ENCODE measurements at regions of chr11 and their contacts with region 1.

Region 1: DNA sequence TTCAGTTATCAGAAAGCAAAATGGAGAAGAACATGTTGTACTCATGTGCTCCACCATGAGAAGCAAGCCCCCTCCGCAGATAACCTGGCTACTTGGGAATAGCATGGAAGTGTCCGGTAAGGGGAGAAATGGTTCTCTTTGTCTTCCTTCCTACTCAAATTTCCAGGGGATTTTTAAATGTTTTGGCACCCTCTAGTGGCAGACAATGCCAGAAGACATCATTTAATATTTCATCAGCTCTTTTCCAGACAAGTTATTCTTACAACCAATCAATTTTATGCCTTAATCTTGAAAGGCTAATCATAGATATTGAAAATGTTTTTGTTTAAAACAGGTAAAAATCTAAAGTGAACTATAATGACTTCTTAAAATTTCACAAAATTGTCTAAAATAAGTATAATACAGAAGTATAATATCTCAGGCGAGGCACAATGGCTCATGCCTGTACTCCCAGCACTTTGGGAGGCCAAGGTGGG is 15.7 kb downstream of the CRTAM start:
- DNase-seq: peak; percentile 85
- H3K4me3 Mint-ChIP-seq: no peak overlapping the region
- H3K27ac Mint-ChIP-seq: no peak overlapping the region
- H3K4me1 Mint-ChIP-seq: peaks cover 41% of the 10 kb centered on the region
- H3K27me3 Mint-ChIP-seq: peaks cover 17% of the 10 kb centered on the region

Region 2: DNA sequence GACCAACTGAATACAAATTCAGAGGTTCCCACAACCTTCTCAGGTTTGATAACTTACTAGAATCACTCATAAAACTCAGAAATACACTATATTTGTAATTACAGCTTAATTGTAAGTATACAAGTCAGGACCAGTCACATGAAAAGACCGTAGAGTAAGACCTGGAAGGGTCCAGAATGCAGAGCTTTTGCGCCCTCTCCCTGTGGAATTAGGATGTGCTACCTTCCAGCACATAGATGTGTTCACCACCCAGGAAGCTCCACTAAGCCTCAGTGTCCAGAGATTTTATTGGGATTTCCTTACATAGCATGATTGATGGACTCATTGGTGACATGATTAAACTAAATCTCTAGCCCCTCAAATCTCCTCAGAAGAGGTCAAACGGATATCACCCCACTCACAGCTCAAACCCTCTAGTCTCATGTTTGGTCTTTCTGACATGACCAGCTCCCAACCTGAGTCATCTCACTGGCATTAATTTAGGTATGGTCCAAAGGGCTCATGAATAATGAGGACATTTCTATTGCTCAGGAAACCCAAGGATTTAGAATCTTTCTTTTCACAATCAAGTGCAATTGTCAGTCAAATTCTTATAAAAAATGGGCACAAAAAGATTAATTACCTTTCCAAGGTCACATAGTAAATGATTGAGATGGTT is 275.7 kb before region 1 on chr11:
- intact Hi-C with region 1: loop called (anchors 1 kb)
- DNase-seq: no peak
- H3K4me3 Mint-ChIP-seq: no peak overlapping the region
- H3K27ac Mint-ChIP-seq: no peak overlapping the region
- H3K4me1 Mint-ChIP-seq: peaks cover 7% of the 10 kb centered on the region
- H3K27me3 Mint-ChIP-seq: no peaks in the 10 kb centered on the region

Region 3: GRCh38 chr11:122655527-122656072 is 198.4 kb before region 1 on chr11 and contains the start of gene UBASH3B:
- intact Hi-C with region 1: loop called (anchors 10 kb)
- DNase-seq: peak; percentile 89
- H3K4me3 Mint-ChIP-seq: peak within 1 kb of the TSS; percentile 97
- H3K27ac Mint-ChIP-seq: peak within 1 kb of the TSS; percentile 86
- H3K4me1 Mint-ChIP-seq: peaks cover 17% of the 10 kb centered on the region
- H3K27me3 Mint-ChIP-seq: peaks cover 50% of the 10 kb centered on the region
- total RNA-seq, gene UBASH3B: 10.9 and 14.8 TPM in 2 replicates

Region 4: DNA sequence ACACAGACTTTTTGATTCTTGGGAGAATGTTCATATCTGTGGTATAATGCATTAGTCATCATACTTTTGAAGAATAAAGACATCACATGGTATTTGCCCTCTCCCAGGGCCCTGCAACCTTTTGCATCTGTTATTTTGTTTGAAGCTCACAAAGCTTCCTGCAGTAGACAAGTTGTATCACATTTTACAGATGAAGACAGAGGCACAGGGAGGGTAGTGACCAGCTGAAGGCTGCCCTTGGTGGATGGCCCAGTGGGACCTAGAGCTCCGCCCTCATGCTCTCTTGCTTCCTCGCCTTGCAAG is 132.1 kb before region 1 on chr11:
- intact Hi-C with region 1: loop called (anchors 1 kb)
- DNase-seq: peak; percentile 61
- H3K4me3 Mint-ChIP-seq: no peak overlapping the region
- H3K27ac Mint-ChIP-seq: peak overlapping the region; percentile 45
- H3K4me1 Mint-ChIP-seq: peaks cover 51% of the 10 kb centered on the region
- H3K27me3 Mint-ChIP-seq: peaks cover 14% of the 10 kb centered on the region

Region 5: GRCh38 chr11:122769126-122769780 is 84.8 kb before region 1 on chr11:
- intact Hi-C with region 1: no loop called
- DNase-seq: no peak
- H3K4me3 Mint-ChIP-seq: no peak overlapping the region
- H3K27ac Mint-ChIP-seq: no peak overlapping the region
- H3K4me1 Mint-ChIP-seq: no peaks in the 10 kb centered on the region
- H3K27me3 Mint-ChIP-seq: peaks cover 11% of the 10 kb centered on the region

Region 6: GRCh38 chr11:122781378-122782195 is 72.4 kb before region 1 on chr11:
- intact Hi-C with region 1: loop called (anchors 1 kb)
- DNase-seq: peak; percentile 91
- H3K4me3 Mint-ChIP-seq: no peak overlapping the region
- H3K27ac Mint-ChIP-seq: no peak overlapping the region
- H3K4me1 Mint-ChIP-seq: peaks cover 16% of the 10 kb centered on the region
- H3K27me3 Mint-ChIP-seq: no peaks in the 10 kb centered on the region

Region 7: DNA sequence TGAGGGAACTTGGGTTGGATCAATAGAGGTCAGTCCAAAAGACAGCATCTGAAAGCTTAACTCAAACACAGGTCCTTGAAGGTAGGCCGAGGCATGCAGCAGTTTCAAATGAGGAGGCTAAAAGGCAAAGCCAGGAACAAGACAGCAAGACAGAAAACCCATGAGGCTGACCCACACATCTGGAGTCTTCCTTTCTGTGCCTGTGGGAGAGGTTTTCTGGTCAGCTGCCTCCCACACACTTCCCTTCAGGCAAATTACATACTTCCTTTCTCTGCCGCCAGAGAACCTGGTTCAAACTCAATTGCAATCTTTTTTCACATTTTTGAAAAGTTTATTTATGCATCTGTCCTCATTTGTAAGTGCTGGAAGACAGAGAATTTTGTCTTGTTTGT is 45.5 kb before region 1 on chr11:
- intact Hi-C with region 1: loop called (anchors 1 kb)
- DNase-seq: peak; percentile 61
- H3K4me3 Mint-ChIP-seq: peak overlapping the region; percentile 16
- H3K27ac Mint-ChIP-seq: peak overlapping the region; percentile 25
- H3K4me1 Mint-ChIP-seq: peaks cover 21% of the 10 kb centered on the region
- H3K27me3 Mint-ChIP-seq: peaks cover 4% of the 10 kb centered on the region

Region 8: GRCh38 chr11:122882857-122883645 is 29.0 kb after region 1 on chr11:
- intact Hi-C with region 1: loop called (anchors 2 kb)
- DNase-seq: peak; percentile 86
- H3K4me3 Mint-ChIP-seq: peak overlapping the region; percentile 85
- H3K27ac Mint-ChIP-seq: peak overlapping the region; percentile 75
- H3K4me1 Mint-ChIP-seq: peaks cover 19% of the 10 kb centered on the region
- H3K27me3 Mint-ChIP-seq: peaks cover 15% of the 10 kb centered on the region

Region 9: GRCh38 chr11:123729602-123730001 is 875.6 kb after region 1 on chr11:
- intact Hi-C with region 1: no loop called
- DNase-seq: no peak
- H3K4me3 Mint-ChIP-seq: no peak overlapping the region
- H3K27ac Mint-ChIP-seq: no peak overlapping the region
- H3K4me1 Mint-ChIP-seq: no peaks in the 10 kb centered on the region
- H3K27me3 Mint-ChIP-seq: no peaks in the 10 kb centered on the region

Measured in activated CD4-positive, alpha-beta T cell treated with anti-CD3 and anti-CD28 coated beads, Interleukin-2, amount 10 ng/mL, durations not matched to agents 24 days and 14 days (primary cell).